Activated naive CD8-positive, alpha-beta T cell treated with anti-CD3 and anti-CD28 coated beads, Interleukin-2, amount 10 ng/mL, durations not matched to agents 7 days and 5 days (primary cell): ENCODE measurements at regions of chr5 and their contacts with region 1.

Region 1: GRCh38 chr5:148826053-148826738 is at the start of gene ADRB2:
- DNase-seq: peak; percentile 88
- ATAC-seq: peak; percentile 94
- H3K4me3 Mint-ChIP-seq: peak within 1 kb of the TSS; percentile 88
- H3K27ac Mint-ChIP-seq: peak within 1 kb of the TSS; percentile 69
- H3K4me1 Mint-ChIP-seq: peaks cover 20% of the 10 kb centered on the region
- H3K27me3 Mint-ChIP-seq: peaks cover 66% of the 10 kb centered on the region
- total RNA-seq, gene ADRB2: 5.3 to 6.3 TPM

Region 2: GRCh38 chr5:148849461-148849860 is 23.3 kb after region 1 on chr5:
- POLR2A ChIA-PET with region 1: interaction called, 10 read pairs
- DNase-seq: no peak
- ATAC-seq: peak; percentile 95
- H3K4me3 Mint-ChIP-seq: peak overlapping the region; percentile 48
- H3K27ac Mint-ChIP-seq: peak overlapping the region; percentile 95
- H3K4me1 Mint-ChIP-seq: peaks cover 42% of the 10 kb centered on the region
- H3K27me3 Mint-ChIP-seq: peaks cover 3% of the 10 kb centered on the region